ENCODE measurements at regions of chr1 and their contacts with region 1.

Region 1: GRCh38 chr1:183590244-183591191 is at the start of gene NCF2:
- DNase-seq: peak; percentile 71
- H3K4me3 Mint-ChIP-seq: peak within 1 kb of the TSS; percentile 64
- H3K27ac Mint-ChIP-seq: peak within 1 kb of the TSS; percentile 70
- H3K4me1 Mint-ChIP-seq: peaks cover 39% of the 10 kb centered on the region
- H3K27me3 Mint-ChIP-seq: no peaks in the 10 kb centered on the region
- total RNA-seq, gene NCF2: 6.6 to 7.7 TPM

Region 2: GRCh38 chr1:183537405-183537804 is 53.1 kb before region 1 on chr1:
- CTCF ChIA-PET with region 1: no interaction called
- POLR2A ChIA-PET with region 1: no interaction called
- intact Hi-C with region 1: no loop called
- DNase-seq: no peak
- H3K4me3 Mint-ChIP-seq: no peak overlapping the region
- H3K27ac Mint-ChIP-seq: peak overlapping the region; percentile 73
- H3K4me1 Mint-ChIP-seq: peaks cover 6% of the 10 kb centered on the region
- H3K27me3 Mint-ChIP-seq: no peaks in the 10 kb centered on the region

Region 3: GRCh38 chr1:183568176-183569021 is 22.1 kb before region 1 on chr1:
- CTCF ChIA-PET with region 1: no interaction called
- POLR2A ChIA-PET with region 1: no interaction called
- intact Hi-C with region 1: loop called (anchors 1 kb)
- DNase-seq: peak; percentile 45
- H3K4me3 Mint-ChIP-seq: no peak overlapping the region
- H3K27ac Mint-ChIP-seq: peak overlapping the region; percentile 69
- H3K4me1 Mint-ChIP-seq: peaks cover 22% of the 10 kb centered on the region
- H3K27me3 Mint-ChIP-seq: no peaks in the 10 kb centered on the region

Region 4: DNA sequence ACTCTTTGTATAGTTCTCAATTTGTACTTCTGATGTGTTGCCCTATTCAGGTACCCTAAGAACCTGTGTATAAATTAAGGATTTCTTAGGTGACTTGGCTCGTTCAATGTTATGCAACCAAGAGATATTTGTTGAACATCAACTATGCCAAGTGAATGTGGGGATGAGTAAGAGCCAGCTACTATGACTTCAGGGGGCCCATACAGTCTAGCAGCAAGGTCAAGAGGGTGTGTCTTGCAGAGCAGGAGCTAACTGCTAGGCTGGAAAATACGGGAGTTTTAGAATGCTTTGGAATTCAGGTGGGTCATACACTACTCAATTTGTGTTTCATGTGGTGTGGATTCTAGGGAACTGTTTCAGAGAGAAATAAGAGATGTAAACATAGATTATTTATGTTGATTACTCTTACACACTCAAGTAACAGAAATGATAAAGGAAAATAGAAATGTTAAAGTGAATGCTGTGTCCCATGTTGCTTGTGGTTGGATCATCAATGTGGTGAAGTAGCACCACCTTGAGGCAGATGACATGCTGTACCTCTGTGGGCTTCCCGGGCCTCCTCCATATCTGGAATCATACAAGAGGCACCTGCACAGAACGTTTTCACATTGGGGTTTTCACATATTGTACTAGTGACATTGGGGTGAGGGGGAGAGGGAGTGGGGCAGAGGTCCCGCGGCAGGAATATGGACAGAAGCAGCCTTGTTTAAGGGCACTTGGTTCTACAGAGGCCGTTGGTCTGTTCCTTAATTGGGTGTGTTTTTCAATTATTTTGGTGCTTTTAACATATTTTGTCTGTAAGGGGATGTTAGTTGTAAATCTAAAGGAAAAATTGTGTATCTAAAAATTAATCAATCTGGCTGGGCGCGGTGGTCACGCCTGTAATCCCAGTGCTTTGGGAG is 32.6 kb after region 1 on chr1:
- CTCF ChIA-PET with region 1: no interaction called
- POLR2A ChIA-PET with region 1: no interaction called
- intact Hi-C with region 1: loop called (anchors 2 kb)
- DNase-seq: peak; percentile 63
- H3K4me3 Mint-ChIP-seq: no peak overlapping the region
- H3K27ac Mint-ChIP-seq: no peak overlapping the region
- H3K4me1 Mint-ChIP-seq: peaks cover 4% of the 10 kb centered on the region
- H3K27me3 Mint-ChIP-seq: no peaks in the 10 kb centered on the region

Region 5: GRCh38 chr1:183635606-183636333 is 45.3 kb after region 1 on chr1 and contains the start of gene ARPC5:
- CTCF ChIA-PET with region 1: interaction called, 3 read pairs
- POLR2A ChIA-PET with region 1: interaction called, 4 read pairs
- intact Hi-C with region 1: loop called (anchors 1 kb)
- DNase-seq: peak; percentile 98
- H3K4me3 Mint-ChIP-seq: peak within 1 kb of the TSS; percentile 95
- H3K27ac Mint-ChIP-seq: peak within 1 kb of the TSS; percentile 99
- H3K4me1 Mint-ChIP-seq: peaks cover 33% of the 10 kb centered on the region
- H3K27me3 Mint-ChIP-seq: no peaks in the 10 kb centered on the region
- total RNA-seq, gene ARPC5: 158 to 161 TPM

Region 6: DNA sequence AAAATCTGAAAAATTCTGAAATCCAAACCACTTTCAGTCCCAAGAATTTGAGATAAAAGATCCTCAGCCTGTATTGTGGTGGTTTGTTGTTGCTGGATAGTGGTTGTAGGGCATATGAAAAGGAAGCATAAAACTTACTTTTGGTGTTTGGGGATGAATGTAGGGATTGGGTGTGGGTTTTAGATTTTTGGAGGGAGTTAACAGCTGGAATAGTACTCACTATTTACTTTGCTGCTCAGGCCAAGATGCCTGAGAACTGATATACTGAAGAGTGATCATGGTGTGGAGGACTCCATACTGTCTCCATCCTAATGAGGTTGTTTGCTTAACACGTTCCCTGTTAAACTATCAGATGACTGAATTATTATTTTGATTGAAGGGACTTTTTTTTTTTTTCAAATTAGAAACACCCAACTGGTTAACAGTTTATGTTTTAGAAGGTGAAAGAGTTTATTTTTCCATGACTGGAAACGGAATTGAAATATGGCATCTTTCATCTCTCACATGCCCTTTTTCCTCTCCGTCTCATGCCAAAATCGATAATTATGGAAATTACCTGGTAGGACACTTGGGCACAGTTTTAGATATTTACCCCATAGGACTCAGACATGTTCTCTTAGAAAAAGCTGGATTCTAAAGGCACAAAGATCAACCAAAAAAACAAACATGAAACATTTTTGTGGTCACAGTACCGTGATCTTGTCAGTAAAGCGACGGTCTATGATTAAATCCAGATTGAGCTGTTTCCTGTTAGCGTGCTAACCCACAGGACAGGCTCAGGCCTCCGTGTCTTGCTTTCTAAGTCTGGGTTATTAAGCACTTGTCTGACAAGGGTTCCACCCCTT is 251.7 kb after region 1 on chr1:
- CTCF ChIA-PET with region 1: no interaction called
- POLR2A ChIA-PET with region 1: no interaction called
- intact Hi-C with region 1: loop called (anchors 5 kb)
- DNase-seq: peak; percentile 51
- H3K4me3 Mint-ChIP-seq: peak overlapping the region; percentile 40
- H3K27ac Mint-ChIP-seq: peak overlapping the region; percentile 66
- H3K4me1 Mint-ChIP-seq: peaks cover 25% of the 10 kb centered on the region
- H3K27me3 Mint-ChIP-seq: no peaks in the 10 kb centered on the region